Stomach (tissue), 19 donors: ENCODE measurements at regions of chr7 and their contacts with region 1.

Region 1: GRCh38 chr7:48109848-48110663 is 21.0 kb downstream of the UPP1 start:
- DNase-seq: peak; percentile 86 to 88
- H3K4me3 ChIP-seq: no peak overlapping the region
- H3K27ac ChIP-seq: no peak overlapping the region
- H3K4me1 ChIP-seq: no peaks in the 10 kb centered on the region
- H3K27me3 ChIP-seq: no peaks in the 10 kb centered on the region
- CTCF ChIP-seq: peak in 6 of 7 experiments; percentile 93 to 99 (median 98)
- EP300 ChIP-seq: no peak
- POLR2A ChIP-seq: no peak

Region 2: DNA sequence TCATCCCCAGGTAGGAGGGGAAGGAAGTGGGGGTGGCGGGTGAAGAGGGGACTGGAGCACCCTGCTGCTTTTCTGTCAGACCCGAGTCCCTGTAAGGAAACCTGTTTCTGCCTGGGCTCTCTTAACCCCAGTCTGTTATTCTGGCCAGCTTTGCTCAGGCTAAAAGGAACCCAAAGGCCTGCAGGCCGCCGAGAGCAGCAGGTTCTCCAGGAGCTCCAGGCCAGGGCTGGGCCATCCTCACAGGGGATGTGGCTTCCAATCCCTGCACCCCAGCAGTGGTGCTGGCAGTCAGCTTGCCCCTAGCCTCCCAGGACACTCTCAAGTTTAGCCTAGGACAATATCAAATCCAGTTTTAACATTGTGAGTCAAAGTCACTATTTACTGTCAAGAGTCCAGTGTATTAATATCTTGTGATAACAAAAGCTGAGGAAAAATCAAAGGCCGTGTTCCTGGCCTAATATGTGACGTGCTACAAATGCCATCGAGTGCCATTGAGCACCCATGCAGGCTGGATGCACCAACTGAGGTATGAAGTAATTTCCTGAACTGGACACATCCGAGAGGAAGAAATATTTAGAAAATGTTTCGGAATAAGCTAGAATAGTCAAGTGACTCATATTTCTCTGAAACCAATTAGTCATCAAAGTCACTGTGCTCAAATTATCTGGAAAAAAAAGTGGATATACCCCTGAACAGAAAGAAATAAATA is 168.8 kb before region 1 on chr7:
- intact Hi-C with region 1: loop called (anchors 5 kb)
- DNase-seq: no peak
- H3K4me3 ChIP-seq: no peak overlapping the region
- H3K27ac ChIP-seq: peak overlapping the region; percentile 36 to 79 (median 68)
- H3K4me1 ChIP-seq: peaks cover 0 to 15% (median 2%) of the 10 kb centered on the region in 4 donors
- H3K27me3 ChIP-seq: no peaks in the 10 kb centered on the region
- CTCF ChIP-seq: no peak
- EP300 ChIP-seq: no peak
- POLR2A ChIP-seq: no peak

Region 3: DNA sequence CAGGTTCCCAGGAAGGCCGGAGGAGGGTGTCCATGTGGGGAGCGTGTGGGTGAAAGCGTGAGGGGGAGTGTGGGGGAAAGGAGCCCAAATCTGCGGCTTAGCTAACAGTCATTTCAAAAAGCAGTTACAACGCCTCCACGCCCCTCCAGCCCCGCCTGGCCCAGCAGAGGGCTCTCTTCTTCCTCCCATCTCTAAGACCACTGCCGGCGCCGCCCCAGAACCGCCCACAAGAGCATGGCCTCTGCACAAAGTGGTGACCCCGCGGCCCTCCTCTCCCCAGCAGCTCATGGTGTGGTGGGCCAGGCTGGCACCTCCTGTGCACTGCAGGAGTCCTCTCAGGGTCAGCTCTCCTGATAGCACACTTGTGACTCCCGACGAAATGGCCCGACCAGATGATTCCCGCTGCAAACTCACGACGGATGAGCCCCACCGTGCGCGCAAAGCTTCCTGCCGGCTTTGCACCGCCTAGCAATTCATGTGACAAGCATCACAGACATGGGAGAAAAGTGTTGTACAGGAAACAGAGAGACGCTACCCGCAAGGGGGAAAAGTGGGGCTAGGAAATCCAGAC is 118.2 kb before region 1 on chr7:
- intact Hi-C with region 1: loop called (anchors 10 kb)
- DNase-seq: peak; percentile 77 to 93
- H3K4me3 ChIP-seq: peak overlapping the region; percentile 39 to 59 (median 50)
- H3K27ac ChIP-seq: peak overlapping the region; percentile 2 to 77 (median 51)
- H3K4me1 ChIP-seq: peaks cover 0 to 15% (median 2%) of the 10 kb centered on the region in 4 donors
- H3K27me3 ChIP-seq: no peaks in the 10 kb centered on the region
- CTCF ChIP-seq: peak in 4 of 7 experiments; percentile 33 to 59 (median 48)
- EP300 ChIP-seq: no peak
- POLR2A ChIP-seq: no peak